CD4-positive, alpha-beta memory T cell (primary cell): ENCODE measurements at regions of chr4 and their contacts with region 1.

Region 1: DNA sequence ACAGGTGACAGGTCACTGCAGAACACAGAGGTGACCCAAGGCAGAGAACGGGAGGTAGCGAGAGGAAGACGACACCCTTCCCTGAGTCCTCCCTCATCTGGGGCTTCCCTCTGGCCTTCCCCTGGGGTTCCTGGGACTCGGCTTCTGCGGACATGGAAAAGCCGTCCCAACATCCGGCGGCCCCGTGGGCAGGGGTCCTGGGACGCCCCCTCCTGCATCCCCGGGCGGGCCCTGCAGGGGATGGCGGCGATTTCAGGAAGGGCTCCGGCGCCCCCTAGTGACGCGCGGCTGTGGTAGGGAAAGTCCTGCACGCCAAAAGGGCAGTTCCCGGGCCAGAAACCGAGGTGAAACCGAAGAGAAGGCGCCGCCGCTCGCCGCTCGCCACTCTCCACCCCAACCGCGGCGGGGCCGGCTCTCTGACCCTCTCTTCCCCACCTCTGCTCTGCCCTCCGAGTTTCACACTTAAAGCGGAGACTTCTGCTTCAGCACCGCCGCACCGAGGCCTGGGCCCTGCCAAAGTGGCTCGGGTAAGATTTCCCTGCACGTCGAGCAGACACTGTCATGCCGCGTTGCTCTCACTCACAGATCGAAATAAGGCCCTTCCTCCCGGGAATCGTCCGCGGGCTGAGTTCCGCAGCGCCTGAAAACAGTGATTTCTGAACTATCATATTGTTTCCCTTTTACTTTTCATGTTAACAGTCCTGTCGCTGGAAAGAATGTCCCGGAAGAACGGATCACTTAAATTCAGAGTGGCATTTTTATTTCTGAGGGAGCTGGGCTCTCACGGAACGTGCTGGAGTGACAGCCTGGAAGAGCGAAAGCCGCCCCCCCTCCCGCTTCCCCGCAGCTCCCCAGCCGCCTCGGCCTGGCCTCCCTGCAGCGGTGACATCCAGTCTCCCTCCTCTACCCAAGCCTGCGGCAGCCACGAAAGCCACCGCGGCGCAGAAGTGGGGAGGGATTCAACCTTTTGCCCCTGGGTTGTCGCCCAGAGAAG is 110.6 kb downstream of the DCTD start:
- DNase-seq: peak; percentile 11 to 53 (median 48)
- H3K4me3 ChIP-seq: peak overlapping the region in 1 of 2 donors; percentile 28
- H3K4me3 Mint-ChIP-seq: peak overlapping the region; percentile 31 to 92 (median 76)
- H3K27ac ChIP-seq: no peak overlapping the region
- H3K27ac Mint-ChIP-seq: peak overlapping the region in 5 of 7 donors; percentile 30 to 77 (median 56)
- H3K4me1 ChIP-seq: peaks cover 25% of the 10 kb centered on the region
- H3K4me1 Mint-ChIP-seq: peaks cover 8 to 19% (median 9%) of the 10 kb centered on the region in 4 donors
- H3K27me3 ChIP-seq: no peaks in the 10 kb centered on the region
- H3K27me3 Mint-ChIP-seq: peaks cover 0 to 1% of the 10 kb centered on the region in 2 donors

Region 2: GRCh38 chr4:182478475-182478874 is 328.1 kb before region 1 on chr4:
- CTCF ChIA-PET with region 1: no interaction called
- POLR2A ChIA-PET with region 1: no interaction called
- intact Hi-C with region 1: loop called (anchors 1 kb)
- DNase-seq: peak in 4 of 5 donors; percentile 14 to 32 (median 21)
- H3K4me3 ChIP-seq: no peak overlapping the region
- H3K4me3 Mint-ChIP-seq: no peak overlapping the region
- H3K27ac ChIP-seq: no peak overlapping the region
- H3K27ac Mint-ChIP-seq: no peak overlapping the region
- H3K4me1 ChIP-seq: no peaks in the 10 kb centered on the region
- H3K4me1 Mint-ChIP-seq: no peaks in the 10 kb centered on the region
- H3K27me3 ChIP-seq: no peaks in the 10 kb centered on the region
- H3K27me3 Mint-ChIP-seq: peaks cover 3 to 6% of the 10 kb centered on the region in 2 donors